Activated CD8-positive, alpha-beta T cell treated with anti-CD3 and anti-CD28 coated beads, Interleukin-2, amount 10 ng/mL, durations not matched to agents 7 days and 5 days (primary cell): ENCODE measurements at regions of chr3 and their contacts with region 1.

Region 1: DNA sequence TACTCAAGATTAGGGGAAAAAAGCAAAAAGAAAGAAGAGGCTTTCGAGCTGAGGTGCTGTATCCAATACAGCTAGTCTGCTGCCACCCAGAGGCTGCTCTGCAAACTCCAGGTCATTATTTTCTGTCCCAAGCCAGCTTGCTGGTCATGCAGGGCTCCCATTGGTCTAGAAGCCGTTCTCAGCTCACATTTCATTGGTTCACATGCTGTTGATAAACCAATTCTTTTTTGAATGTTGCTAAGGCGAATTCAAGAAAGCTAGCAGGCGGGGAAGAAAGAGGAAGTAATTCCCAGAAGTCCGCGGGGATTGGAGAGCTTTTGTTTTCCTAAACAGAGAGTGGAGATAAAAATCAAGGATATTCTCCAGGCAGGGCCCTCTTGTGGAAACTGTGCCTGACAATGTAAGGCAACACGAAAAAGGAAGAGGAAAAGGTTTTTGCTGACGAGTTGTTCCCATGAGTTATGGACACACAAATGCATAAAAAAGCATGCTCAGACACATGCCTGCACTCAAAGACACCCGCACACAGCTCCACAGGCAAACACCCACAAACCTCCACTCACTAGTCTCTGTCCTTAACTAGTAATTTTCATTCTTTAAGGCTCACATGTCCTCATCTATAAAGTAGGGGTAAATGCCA is 33.4 kb downstream of the FSTL1 start:
- DNase-seq: peak; percentile 94
- ATAC-seq: peak; percentile 99
- H3K4me3 Mint-ChIP-seq: peak overlapping the region; percentile 76
- H3K27ac Mint-ChIP-seq: peak overlapping the region; percentile 43
- H3K4me1 Mint-ChIP-seq: peaks cover 20% of the 10 kb centered on the region
- H3K27me3 Mint-ChIP-seq: peaks cover 8% of the 10 kb centered on the region

Region 2: GRCh38 chr3:119891944-119892721 is 525.3 kb before region 1 on chr3:
- CTCF ChIA-PET with region 1: interaction called, 29 read pairs
- POLR2A ChIA-PET with region 1: no interaction called
- DNase-seq: peak; percentile 68
- ATAC-seq: peak; percentile 80
- H3K4me3 Mint-ChIP-seq: no peak overlapping the region
- H3K27ac Mint-ChIP-seq: no peak overlapping the region
- H3K4me1 Mint-ChIP-seq: peaks cover 4% of the 10 kb centered on the region
- H3K27me3 Mint-ChIP-seq: no peaks in the 10 kb centered on the region

Region 3: DNA sequence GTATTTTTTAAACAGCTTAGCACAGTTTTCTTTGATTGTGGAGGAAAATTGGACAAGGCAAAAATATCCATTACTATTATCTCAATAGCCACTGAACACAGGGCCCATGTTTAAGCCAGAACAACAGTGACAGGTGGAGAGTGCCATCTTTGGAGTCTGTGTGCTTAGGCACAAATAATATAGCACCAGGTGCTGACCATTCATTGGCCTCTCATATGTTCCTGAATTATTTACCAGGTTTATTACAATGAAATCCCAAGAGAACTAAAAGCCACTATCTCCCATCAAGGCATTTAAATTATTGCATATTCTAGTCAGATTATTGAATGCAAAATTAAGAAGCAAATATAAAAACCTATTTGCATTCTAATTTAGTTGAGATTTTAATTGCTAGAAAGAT is 172.0 kb before region 1 on chr3:
- CTCF ChIA-PET with region 1: interaction called, 164 read pairs
- POLR2A ChIA-PET with region 1: interaction called, 3 read pairs
- DNase-seq: no peak
- ATAC-seq: no peak
- H3K4me3 Mint-ChIP-seq: no peak overlapping the region
- H3K27ac Mint-ChIP-seq: no peak overlapping the region
- H3K4me1 Mint-ChIP-seq: no peaks in the 10 kb centered on the region
- H3K27me3 Mint-ChIP-seq: peaks cover 14% of the 10 kb centered on the region

Region 4: DNA sequence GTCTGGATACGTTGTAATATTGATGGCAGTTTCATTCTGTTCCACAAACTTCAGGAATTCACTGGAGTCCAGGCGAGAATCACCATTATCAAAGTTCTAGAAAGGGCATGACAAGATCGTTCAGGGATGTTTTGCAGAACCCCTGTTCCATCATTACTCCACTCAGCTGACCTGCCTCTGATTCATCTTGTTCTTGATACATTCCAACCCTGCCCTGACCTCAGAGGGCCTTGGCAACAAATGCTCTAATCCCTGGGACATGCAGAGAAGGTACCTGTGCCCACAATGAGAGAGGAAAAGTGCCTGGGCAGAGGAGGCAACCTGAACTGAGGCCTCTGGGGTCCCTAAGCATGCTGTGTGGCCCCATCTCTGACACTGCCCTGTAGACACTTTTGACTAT is 12.5 kb before region 1 on chr3:
- CTCF ChIA-PET with region 1: interaction called, 16 read pairs
- POLR2A ChIA-PET with region 1: no interaction called
- DNase-seq: no peak
- ATAC-seq: no peak
- H3K4me3 Mint-ChIP-seq: no peak overlapping the region
- H3K27ac Mint-ChIP-seq: no peak overlapping the region
- H3K4me1 Mint-ChIP-seq: no peaks in the 10 kb centered on the region
- H3K27me3 Mint-ChIP-seq: no peaks in the 10 kb centered on the region

Region 5: GRCh38 chr3:120558771-120559241 is 141.4 kb after region 1 on chr3:
- CTCF ChIA-PET with region 1: interaction called, 134 read pairs
- POLR2A ChIA-PET with region 1: interaction called, 3 read pairs
- DNase-seq: peak; percentile 92
- ATAC-seq: peak; percentile 93
- H3K4me3 Mint-ChIP-seq: peak overlapping the region; percentile 76
- H3K27ac Mint-ChIP-seq: peak overlapping the region; percentile 45
- H3K4me1 Mint-ChIP-seq: peaks cover 11% of the 10 kb centered on the region
- H3K27me3 Mint-ChIP-seq: peaks cover 3% of the 10 kb centered on the region

Region 6: GRCh38 chr3:120795017-120795648 is 377.7 kb after region 1 on chr3:
- CTCF ChIA-PET with region 1: interaction called, 30 read pairs
- POLR2A ChIA-PET with region 1: no interaction called
- DNase-seq: peak; percentile 87
- ATAC-seq: peak; percentile 98
- H3K4me3 Mint-ChIP-seq: no peak overlapping the region
- H3K27ac Mint-ChIP-seq: no peak overlapping the region
- H3K4me1 Mint-ChIP-seq: no peaks in the 10 kb centered on the region
- H3K27me3 Mint-ChIP-seq: peaks cover 3% of the 10 kb centered on the region